Activated T-helper 2 cell treated with anti-CD3 and anti-CD28 coated beads, Interferon-gamma antibody, Interleukin-2, Interleukin-4, amounts not matched to agents 10 μg/mL and 5 μg/mL and 100 μg/mL, durations not matched to agents 14 hours and 24 hours and 36 hours (primary cell): ENCODE measurements at regions of chr17 and their contacts with region 1.

Region 1: DNA sequence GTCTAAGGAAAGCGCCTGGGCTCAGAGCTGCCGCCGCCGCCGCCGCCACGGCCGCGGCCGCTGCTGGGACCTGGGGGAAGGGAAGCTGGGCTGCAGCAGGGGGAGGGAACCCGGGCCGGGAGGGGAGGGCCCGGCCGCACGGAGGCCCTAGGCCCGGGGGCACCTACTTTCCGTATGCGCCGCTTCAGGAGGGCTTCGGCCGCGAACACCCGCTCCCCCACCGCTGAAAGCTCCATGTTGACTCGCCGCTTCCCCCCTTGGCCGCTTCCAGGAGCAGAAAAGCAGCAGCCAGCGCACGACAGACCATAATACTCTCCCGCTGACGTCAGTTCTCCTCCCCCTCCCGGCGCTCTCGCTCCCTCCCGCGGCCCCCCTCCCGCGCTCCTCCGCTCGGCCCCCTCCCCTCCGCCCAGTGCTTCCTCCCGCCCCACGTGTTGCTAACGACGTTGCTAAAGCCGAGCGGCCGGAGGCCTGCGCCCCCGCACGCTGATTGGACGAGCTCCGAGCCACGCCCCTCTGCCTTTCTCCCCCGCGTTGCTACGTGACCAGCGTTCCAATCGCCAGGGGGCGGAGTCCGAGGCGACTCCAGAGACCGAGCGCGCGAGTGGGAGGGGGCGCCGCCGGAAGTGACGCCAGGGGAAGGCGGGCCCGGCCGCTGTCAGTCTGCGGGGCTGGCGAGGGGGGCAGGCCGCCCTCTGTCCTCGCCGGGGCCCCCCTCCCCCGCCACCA is at the start of gene CBX8:
- DNase-seq: peak; percentile 100
- H3K4me3 Mint-ChIP-seq: peak within 1 kb of the TSS; percentile 85
- H3K27ac Mint-ChIP-seq: peak within 1 kb of the TSS; percentile 78
- H3K4me1 Mint-ChIP-seq: peaks cover 23% of the 10 kb centered on the region
- H3K27me3 Mint-ChIP-seq: peaks cover 36% of the 10 kb centered on the region
- total RNA-seq, gene CBX8: 8.6 and 9.9 TPM in 2 replicates

Region 2: DNA sequence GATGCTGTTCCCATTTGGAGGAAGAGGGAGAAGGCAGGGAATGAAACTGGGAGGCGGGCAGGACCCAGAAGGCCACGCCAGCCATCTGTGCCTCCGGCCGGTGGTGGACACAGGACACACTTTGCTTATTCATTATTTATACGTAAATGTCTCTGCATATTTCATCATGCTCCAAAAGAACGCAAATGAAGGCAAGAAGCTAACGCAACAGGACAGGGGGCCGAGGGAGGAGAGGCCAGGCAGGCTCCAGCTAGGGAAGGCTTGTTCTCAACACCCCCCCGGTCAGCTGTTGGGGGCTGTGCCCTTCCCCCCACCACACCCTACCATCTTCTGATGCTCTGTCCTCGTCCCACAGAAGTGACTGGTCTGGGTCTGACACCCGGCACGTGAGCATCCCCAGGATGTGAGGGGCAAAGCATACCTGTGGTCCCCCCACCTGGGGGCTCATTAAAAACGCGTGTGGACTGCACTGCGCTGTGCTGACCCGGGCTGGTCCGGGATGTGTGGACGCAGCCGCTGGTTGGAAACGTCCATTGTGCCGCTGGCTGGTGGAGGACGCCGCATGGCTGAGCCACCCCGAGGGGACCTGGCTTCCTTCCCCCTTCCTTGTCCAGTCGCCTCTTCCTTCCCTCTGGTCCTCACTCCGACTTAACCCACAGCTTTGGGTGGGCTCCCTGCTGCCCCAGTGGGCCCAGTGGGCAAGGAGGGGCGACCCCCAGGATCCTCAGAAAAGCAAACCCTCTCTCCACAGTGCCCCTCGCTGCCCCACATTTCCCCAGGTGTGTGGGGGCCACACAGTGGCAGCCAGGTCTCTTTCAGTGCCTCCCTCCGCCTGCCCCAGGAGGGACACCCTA is 112.6 kb before region 1 on chr17:
- intact Hi-C with region 1: no loop called
- DNase-seq: no peak
- H3K4me3 Mint-ChIP-seq: no peak overlapping the region
- H3K27ac Mint-ChIP-seq: no peak overlapping the region
- H3K4me1 Mint-ChIP-seq: no peaks in the 10 kb centered on the region
- H3K27me3 Mint-ChIP-seq: no peaks in the 10 kb centered on the region

Region 3: DNA sequence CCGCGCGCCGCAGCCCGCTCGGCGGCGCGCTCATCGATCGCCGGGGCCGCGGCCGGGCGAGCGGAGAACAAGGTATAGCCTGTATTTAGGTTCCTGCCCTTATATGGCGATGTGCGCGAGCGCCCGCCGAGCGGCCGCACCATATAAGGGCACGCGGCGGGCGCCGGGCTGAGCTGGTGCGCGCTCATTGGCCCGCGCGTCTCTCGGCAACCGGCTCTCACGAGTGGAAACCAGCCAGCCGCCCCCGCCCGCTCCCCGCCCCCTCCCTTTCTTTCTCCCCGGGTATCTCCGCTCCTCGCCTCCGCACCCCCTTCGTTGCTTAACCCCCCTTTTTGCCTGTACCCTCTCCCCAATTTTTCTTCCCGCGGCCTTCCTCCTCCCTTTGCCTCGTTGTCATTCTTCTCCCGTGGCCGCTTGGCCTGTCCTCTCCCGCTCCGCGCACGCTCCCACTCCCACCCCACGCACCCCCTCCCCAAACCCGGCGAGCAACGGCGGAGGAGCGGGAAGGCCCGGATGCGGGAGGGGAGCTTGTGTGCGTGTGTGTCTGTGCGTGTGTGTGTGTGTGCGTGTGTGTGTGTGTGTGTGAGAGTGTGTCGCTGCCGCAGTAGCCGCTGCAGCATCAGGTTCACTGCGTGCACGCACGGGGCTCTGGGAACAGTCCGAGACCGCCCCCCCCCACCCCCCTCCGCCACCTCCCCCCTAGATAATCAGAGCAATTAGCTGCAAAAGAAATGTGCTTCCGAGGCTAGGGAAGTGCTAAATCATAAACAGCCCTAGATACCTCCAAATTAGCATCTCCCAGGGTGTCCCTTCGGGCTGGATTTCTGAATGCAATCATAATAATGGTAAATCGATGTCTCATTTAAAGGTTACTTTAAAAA is 13.4 kb after region 1 on chr17:
- intact Hi-C with region 1: loop called (anchors 2 kb)
- DNase-seq: peak; percentile 81
- H3K4me3 Mint-ChIP-seq: peak overlapping the region; percentile 10
- H3K27ac Mint-ChIP-seq: no peak overlapping the region
- H3K4me1 Mint-ChIP-seq: peaks cover 33% of the 10 kb centered on the region
- H3K27me3 Mint-ChIP-seq: peaks cover 59% of the 10 kb centered on the region

Region 4: DNA sequence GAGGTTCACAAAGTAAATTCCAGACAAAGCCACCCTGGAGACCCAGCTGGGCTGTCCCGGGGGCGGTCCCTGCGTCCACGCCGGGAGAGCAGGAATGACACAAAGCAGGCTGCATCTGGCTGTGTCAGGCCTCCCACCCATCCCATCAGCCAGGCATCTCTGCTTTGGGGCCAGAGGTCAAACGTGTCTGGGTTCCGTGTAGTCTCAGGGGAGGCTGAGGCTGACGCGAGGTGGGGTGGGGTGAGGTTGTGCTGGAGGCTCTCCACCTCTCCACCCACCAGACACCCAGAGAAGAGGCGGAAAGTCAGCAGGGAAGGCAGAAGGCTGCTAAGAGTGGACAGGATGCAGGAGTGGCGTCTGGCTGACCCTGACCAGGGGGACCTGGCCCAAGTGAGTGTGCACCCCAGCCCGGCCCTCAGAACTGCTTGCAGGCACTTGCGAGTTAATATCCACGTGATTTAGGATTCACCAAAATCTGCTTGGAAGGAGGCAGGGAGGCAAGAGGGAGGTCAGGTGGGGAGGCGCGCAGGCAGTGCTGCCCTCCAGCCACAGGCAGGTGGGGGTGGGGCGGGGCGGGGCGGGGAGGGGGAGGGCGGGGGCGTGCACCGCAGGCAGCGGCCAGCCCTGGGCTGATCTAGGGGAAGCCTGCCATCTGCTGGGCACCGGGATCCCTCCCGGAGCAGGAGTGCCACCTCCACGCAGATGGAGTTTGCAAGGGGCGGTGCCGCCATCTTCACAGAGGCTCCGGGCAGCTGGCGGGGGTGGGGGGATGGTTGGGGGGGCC is 194.4 kb after region 1 on chr17:
- intact Hi-C with region 1: loop called (anchors 5 kb)
- DNase-seq: peak; percentile 75
- H3K4me3 Mint-ChIP-seq: peak overlapping the region; percentile 35
- H3K27ac Mint-ChIP-seq: no peak overlapping the region
- H3K4me1 Mint-ChIP-seq: peaks cover 24% of the 10 kb centered on the region
- H3K27me3 Mint-ChIP-seq: peaks cover 5% of the 10 kb centered on the region